ENCODE measurements at regions of chr4 and their contacts with region 1.

Region 1: GRCh38 chr4:94507708-94508107 is 56.0 kb downstream of the PDLIM5 start:
- DNase-seq: peak in 1 of 3 donors; percentile 72
- ATAC-seq: peak; percentile 90 to 98 (median 96)
- H3K4me3 ChIP-seq: no peak overlapping the region
- H3K27ac ChIP-seq: peak overlapping the region in 2 of 3 donors; percentile 42 to 61
- H3K4me1 ChIP-seq: peaks cover 0 to 44% (median 14%) of the 10 kb centered on the region in 4 donors
- H3K27me3 ChIP-seq: no peaks in the 10 kb centered on the region
- CTCF ChIP-seq: no peak
- POLR2A ChIP-seq: no peak

Region 2: GRCh38 chr4:94561249-94562024 is 53.7 kb after region 1 on chr4:
- intact Hi-C with region 1: loop called in 1 of 2 experiments (anchors 10 kb)
- DNase-seq: no peak
- ATAC-seq: peak in 3 of 4 donors; percentile 10 to 35 (median 33)
- H3K4me3 ChIP-seq: no peak overlapping the region
- H3K27ac ChIP-seq: peak overlapping the region; percentile 31 to 85 (median 55)
- H3K4me1 ChIP-seq: peaks cover 0 to 70% (median 14%) of the 10 kb centered on the region in 4 donors
- H3K27me3 ChIP-seq: no peaks in the 10 kb centered on the region
- CTCF ChIP-seq: no peak
- POLR2A ChIP-seq: no peak

Measured in right lobe of liver (tissue), 6 donors.